Panc1 (cell line): ENCODE measurements at regions of chr10 and their contacts with region 1.

Region 1: GRCh38 chr10:129448086-129448485 is 19.0 kb upstream of the MGMT start:
- DNase-seq: no peak
- ATAC-seq: no peak
- H3K4me3 ChIP-seq: no peak overlapping the region
- H3K27ac ChIP-seq: no peak overlapping the region
- H3K4me1 ChIP-seq: no peaks in the 10 kb centered on the region
- H3K27me3 ChIP-seq: no peaks in the 10 kb centered on the region; the same call in 1 of the 2 replicates
- CTCF ChIP-seq: no peak

Region 2: DNA sequence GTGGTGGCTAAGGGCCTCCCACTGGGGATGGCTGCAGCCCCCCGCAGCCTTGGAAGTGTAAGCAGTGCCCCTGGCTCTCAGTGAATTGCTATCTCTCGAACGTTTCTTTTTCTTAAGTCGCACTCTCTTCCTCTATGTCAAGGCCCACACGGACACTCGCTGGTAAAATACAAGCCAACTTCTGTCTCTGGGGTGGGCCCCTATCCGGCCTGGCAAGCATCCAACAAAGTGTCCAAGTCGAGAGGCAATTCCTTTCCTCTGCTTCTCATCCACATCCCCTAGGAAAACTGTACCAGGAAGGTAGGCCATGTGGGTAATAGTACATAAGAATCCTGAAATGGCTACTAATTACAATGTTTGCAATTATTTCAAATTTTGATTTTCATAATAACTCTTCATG is 175.9 kb before region 1 on chr10:
- CTCF ChIA-PET with region 1: no interaction called
- POLR2A ChIA-PET with region 1: no interaction called
- in situ Hi-C with region 1: no loop called
- intact Hi-C with region 1: no loop called
- DNase-seq: no peak
- ATAC-seq: no peak
- H3K4me3 ChIP-seq: no peak overlapping the region
- H3K27ac ChIP-seq: no peak overlapping the region
- H3K4me1 ChIP-seq: no peaks in the 10 kb centered on the region
- H3K27me3 ChIP-seq: no peaks in the 10 kb centered on the region
- CTCF ChIP-seq: no peak

Region 3: GRCh38 chr10:129398711-129399141 is 49.4 kb before region 1 on chr10:
- CTCF ChIA-PET with region 1: no interaction called
- POLR2A ChIA-PET with region 1: interaction called, 14 read pairs
- in situ Hi-C with region 1: no loop called
- intact Hi-C with region 1: no loop called
- DNase-seq: no peak
- ATAC-seq: no peak
- H3K4me3 ChIP-seq: no peak overlapping the region
- H3K27ac ChIP-seq: no peak overlapping the region
- H3K4me1 ChIP-seq: no peaks in the 10 kb centered on the region
- H3K27me3 ChIP-seq: peaks cover 19% of the 10 kb centered on the region
- CTCF ChIP-seq: no peak